ENCODE measurements at regions of chr7 and their contacts with region 1.

Region 1: DNA sequence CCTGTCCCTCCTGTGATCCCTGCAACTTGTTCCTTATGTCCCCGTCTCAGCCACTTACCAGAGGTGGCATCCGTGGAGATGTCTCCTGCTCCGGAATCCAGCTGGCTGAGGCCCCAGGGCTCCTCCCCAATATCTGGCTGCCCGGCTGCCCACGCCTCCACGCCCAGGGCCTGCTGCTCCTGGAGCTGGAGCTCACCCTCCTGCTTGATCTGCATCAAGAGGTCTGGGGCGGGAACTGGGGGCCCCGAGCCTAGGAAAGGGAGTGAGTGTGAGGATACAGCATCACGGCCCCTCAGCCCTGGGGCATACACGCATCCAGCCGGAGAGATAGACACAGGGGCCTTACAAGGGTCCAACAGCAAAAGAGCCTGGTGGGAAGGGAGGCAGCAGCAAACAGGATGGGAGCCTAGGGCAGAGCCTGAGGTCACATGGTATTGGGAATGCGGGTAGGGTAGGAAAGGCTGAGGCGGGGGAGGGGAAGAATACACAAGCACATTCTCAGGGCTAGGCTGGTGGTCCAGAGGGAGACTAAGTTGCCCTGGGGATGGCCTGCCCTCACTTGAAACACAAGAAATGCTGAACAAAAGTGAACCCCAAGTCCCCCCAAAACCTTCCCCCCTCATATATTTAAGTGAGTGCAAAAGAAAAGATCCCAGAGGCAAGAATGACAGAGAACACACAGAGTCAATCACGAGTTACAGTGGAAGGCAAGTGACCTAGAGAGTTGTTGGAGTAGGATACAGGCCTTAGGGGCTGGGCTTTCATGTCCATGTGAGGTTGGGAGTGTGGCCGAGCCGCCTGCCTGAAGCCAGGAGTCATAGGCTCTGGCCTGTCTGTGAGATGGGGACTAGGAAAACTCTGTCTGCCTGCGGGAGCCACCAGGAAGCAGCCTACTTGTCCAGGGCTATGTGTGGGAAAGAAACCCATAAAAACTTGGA is 16.9 kb upstream of the ZNF777 start:
- DNase-seq: no peak
- H3K4me3 ChIP-seq: no peak overlapping the region
- H3K27ac ChIP-seq: no peak overlapping the region
- H3K4me1 ChIP-seq: no peaks in the 10 kb centered on the region
- H3K27me3 ChIP-seq: no peaks in the 10 kb centered on the region

Region 2: DNA sequence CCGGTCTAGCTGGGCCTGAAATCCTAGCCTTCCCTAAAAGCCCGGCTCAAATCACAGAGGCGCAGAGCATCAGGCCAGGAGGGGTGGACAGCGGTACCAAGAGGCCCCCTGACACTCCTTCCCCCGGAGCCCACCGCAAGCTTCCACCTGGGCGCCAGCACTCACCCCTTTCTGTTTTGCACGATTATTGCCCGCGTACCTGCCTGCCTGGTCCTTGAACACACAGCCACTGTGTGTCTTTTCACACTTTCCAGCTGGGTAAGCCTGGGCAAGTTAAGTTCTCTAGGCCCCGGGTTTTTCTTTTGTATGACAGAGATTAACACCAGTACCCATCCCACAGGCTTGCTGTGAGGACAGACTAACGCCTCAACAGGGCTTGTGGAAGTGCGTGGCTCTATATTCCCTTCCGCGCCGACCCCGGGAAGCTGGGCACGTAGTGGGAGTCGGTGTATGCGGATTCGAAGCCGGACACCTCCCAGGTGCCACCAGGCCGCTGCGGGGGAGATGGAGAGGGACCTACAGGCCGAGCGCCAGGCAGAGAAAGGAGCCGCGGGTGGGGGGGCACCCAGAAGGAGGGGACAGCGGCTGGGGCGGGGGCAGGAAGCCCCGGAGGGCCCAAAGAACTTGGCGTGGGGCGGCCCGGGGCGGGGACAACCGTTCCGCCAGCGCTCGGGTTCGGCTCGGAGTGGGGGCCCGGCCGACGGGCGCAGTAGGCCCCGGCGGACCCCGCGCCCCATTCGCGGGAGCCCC is 19.0 kb after region 1 on chr7:
- CTCF ChIA-PET with region 1: interaction called, 17 read pairs
- POLR2A ChIA-PET with region 1: no interaction called
- DNase-seq: peak; percentile 21 to 62 (median 47)
- H3K4me3 ChIP-seq: peak overlapping the region; percentile 69 to 90 (median 78)
- H3K27ac ChIP-seq: peak overlapping the region in 1 of 2 experiments; percentile 77
- H3K4me1 ChIP-seq: peaks cover 4 to 37% (median 27%) of the 10 kb centered on the region in 4 experiments
- H3K27me3 ChIP-seq: peaks cover 0 to 1% (median 0%) of the 10 kb centered on the region in 5 experiments

Measured in common myeloid progenitor, CD34-positive (primary cell).